Mucosa of descending colon (tissue), 3 donors: ENCODE measurements at regions of chr3 and their contacts with region 1.

Region 1: GRCh38 chr3:58630076-58630709 is 36.4 kb downstream of the FAM3D start:
- DNase-seq: peak in 2 of 3 donors; percentile 59 to 82
- ATAC-seq: peak; percentile 60
- H3K4me3 ChIP-seq: no peak overlapping the region
- H3K4me1 ChIP-seq: peaks cover 33% of the 10 kb centered on the region
- CTCF ChIP-seq: peak; percentile 79

Region 2: DNA sequence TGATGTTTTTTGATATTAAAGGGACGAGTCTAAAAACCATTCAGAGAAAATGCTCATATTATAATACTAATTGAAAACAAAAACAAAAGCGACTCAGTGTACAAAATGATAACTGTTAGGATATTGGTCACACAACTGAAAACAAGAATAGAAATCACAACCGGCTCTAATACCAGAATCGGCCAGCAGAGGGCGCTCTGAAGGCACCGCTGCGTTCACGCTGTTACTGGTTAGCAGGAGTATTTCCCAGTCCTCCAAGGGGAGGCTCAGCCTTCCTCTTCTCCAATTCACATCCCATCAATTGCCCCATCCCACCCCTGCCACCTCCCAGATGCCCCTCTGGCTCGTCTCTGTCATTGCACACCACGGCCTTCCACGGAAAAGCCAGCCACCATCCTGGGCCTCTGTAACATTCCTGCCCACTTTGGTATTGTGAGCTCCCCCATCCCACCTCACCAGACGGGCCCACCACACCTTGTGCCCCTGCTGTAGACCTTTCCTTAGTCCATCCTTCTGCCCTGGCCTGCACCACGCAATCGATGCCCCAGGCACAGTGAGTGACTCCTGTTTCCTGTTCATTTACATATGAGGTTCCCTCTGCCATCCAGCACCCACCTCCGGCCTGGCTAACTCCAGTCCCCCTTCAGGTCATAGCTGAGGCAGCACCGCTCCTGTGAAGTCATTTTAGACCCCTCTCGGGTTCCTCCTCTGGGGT is 61.5 kb before region 1 on chr3:
- intact Hi-C with region 1: loop called (anchors 2 to 5 kb)
- DNase-seq: peak; percentile 69 to 94 (median 86)
- ATAC-seq: peak; percentile 76
- H3K4me3 ChIP-seq: no peak overlapping the region
- H3K4me1 ChIP-seq: no peaks in the 10 kb centered on the region
- CTCF ChIP-seq: peak; percentile 84